OCI-LY7 (cell line): ENCODE measurements at regions of chr20 and their contacts with region 1.

Region 1: DNA sequence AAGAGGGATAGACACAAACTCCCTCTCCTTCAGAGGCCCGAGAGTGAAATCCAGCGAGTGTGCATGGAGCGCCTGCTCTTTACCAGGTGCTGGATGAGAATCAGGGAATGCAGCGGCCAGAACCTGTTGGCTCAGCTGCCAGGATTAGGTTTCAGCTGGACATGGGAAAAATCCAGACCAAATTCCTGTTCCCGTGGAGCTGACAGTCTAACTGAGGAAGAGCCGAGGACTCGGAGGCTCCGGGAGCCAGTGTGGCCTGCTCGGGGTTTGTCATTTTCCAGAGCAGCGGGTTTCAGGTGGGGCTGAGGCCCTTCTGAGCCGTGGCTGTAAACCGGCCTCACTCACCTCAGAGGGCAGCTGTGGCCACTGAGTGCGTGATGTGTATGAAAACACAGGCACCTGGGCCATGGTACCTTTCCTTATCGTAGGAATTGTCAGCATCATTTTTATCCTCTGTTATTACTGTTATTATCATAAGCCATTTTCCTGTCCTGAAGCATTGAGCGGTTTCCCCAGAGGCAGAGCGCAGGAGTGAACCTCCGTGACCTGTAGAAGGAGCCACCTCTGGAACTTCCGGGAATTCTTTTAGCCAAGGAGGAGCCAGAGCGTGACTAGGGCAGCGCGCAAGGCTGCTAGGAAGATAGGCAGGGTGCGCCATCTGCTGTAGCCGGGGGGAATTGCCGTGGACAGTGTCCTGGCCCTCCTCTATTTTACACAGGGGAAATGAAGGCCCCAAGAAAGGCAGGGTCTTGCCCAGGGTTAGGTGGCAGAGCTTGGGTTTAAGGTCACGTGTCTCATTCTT is 27.3 kb downstream of the PKIG start:
- DNase-seq: peak; percentile 88
- H3K4me3 ChIP-seq: peak overlapping the region; percentile 19
- H3K27ac ChIP-seq: peak overlapping the region; percentile 86
- H3K4me1 ChIP-seq: peaks cover 45% of the 10 kb centered on the region
- CTCF ChIP-seq: peak; percentile 97

Region 2: DNA sequence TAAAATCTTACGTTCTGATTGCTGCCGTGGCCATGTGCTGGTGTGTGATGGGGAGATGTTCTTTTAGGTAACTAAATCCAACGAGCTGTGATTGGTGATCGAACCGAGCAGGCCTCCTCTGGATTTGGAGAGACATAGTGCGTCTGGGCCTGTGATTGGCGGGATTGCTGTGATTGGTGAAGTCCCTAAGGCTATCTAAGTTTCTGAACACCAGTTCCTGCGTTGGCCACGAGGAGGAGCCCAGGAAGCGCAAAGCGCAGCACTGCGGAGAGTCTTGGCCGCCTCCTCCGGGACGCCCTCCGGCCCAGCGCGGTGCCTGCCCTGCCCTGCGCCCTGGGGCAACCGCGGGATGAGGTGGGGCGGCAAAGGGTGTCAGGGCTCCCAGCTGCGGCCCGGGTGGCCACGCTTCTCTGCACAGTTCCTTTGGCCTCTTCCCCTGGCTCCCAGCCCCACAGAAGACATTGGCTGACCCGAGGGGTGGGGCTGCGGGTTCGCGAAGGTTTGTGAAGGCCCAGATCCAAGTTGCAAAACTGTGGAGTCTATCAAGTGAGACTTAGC is 221.2 kb before region 1 on chr20:
- CTCF ChIA-PET with region 1: no interaction called
- POLR2A ChIA-PET with region 1: no interaction called
- intact Hi-C with region 1: loop called (anchors 1 kb)
- DNase-seq: peak; percentile 62
- H3K4me3 ChIP-seq: no peak overlapping the region
- H3K27ac ChIP-seq: no peak overlapping the region
- H3K4me1 ChIP-seq: no peaks in the 10 kb centered on the region
- CTCF ChIP-seq: peak; percentile 81

Region 3: GRCh38 chr20:44407402-44408184 is 202.1 kb before region 1 on chr20:
- CTCF ChIA-PET with region 1: no interaction called
- POLR2A ChIA-PET with region 1: no interaction called
- intact Hi-C with region 1: no loop called
- DNase-seq: no peak
- H3K4me3 ChIP-seq: no peak overlapping the region
- H3K27ac ChIP-seq: no peak overlapping the region
- H3K4me1 ChIP-seq: no peaks in the 10 kb centered on the region
- CTCF ChIP-seq: no peak

Region 4: DNA sequence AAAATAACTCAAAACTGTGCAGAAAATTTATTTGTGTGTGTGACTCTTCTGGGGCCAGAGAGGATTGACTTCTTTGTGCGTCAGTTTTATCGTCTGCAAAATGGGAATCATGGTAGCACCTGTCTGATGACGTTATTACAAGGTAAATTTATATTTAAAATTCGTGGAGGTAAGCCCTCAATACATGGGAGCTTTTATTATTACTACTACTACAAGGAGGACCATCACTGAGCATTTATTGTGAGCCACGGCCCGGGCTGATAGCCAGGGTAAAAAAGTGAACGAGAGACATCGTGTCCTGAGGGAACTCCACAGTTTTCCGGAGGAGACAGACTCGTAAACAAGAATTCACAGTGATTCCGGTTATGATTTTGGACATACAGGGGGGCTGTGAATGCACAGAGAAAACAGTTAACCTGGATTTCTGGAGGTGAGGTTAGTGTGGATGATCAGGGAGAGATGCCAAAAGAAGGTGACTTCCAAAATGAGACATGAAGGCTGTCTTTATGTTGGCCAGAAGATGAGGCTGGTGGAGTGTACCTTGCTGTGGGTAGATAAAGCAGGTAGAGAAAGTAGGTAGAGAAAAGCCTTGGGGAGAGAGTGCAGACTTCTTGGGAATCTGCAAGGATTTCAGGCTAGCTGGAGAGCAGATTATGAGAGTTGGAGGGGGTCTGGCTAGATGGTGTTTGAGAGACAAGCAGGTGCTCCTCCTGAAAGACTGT is 77.3 kb before region 1 on chr20:
- CTCF ChIA-PET with region 1: no interaction called
- POLR2A ChIA-PET with region 1: no interaction called
- intact Hi-C with region 1: loop called (anchors 2 kb)
- DNase-seq: no peak
- H3K4me3 ChIP-seq: peak overlapping the region; percentile 68
- H3K27ac ChIP-seq: no peak overlapping the region
- H3K4me1 ChIP-seq: peaks cover 21% of the 10 kb centered on the region
- CTCF ChIP-seq: no peak

Region 5: DNA sequence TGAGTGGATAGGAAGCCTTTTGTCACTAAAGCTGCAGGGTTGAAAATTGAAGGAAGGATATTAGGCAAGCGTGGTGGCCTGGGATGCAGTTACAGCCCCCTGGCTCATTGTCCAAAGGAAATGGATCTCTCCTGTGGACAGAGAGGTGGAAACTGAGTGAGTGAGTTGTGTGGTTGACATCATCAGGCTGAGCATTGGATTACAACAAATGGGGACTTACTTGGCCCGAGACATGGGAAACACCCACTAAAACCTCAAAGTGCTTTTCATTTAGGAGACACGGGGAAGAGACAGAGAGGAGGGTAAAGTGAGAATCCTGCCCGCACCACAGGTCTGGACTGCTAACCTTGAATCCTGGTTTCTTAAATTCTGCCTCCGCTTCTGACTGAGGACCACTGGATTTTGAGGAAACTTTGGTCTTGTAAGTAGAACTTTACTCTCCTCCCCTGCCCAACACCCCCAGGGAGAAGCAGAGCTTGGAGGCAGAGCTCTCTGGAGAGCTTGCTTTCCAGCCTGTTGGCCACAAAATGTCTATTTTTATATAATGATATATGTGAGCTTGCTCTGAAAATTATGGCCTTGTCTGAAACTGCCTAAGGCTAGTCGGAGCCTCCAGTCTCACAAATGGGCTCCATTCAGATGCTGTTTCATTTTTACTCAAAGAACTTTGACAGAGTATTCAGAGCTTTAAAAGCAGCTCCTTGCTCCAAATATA is 27.2 kb before region 1 on chr20 and contains the start of gene PKIG:
- CTCF ChIA-PET with region 1: interaction called, 12 read pairs
- POLR2A ChIA-PET with region 1: interaction called, 7 read pairs
- intact Hi-C with region 1: loop called (anchors 1 kb)
- DNase-seq: peak; percentile 48
- H3K4me3 ChIP-seq: peak within 1 kb of the TSS; percentile 72
- H3K27ac ChIP-seq: peak within 1 kb of the TSS; percentile 98
- H3K4me1 ChIP-seq: peaks cover 80% of the 10 kb centered on the region
- CTCF ChIP-seq: no peak
- total RNA-seq, gene PKIG: 37.2 and 46.9 TPM in 2 replicates

Region 6: GRCh38 chr20:44728801-44729342 is 119.2 kb after region 1 on chr20:
- CTCF ChIA-PET with region 1: no interaction called
- POLR2A ChIA-PET with region 1: no interaction called
- intact Hi-C with region 1: no loop called
- DNase-seq: no peak
- H3K4me3 ChIP-seq: no peak overlapping the region
- H3K27ac ChIP-seq: no peak overlapping the region
- H3K4me1 ChIP-seq: no peaks in the 10 kb centered on the region
- CTCF ChIP-seq: no peak